ENCODE measurements at regions of chr17 and their contacts with region 1.

Region 1: GRCh38 chr17:48095611-48096010 is 5.7 kb downstream of the CBX1 start:
- DNase-seq: no peak
- ATAC-seq: no peak
- H3K4me3 Mint-ChIP-seq: no peak overlapping the region
- H3K27ac Mint-ChIP-seq: no peak overlapping the region
- H3K4me1 Mint-ChIP-seq: peaks cover 21% of the 10 kb centered on the region
- H3K27me3 Mint-ChIP-seq: no peaks in the 10 kb centered on the region
- CTCF ChIP-seq: no peak

Region 2: DNA sequence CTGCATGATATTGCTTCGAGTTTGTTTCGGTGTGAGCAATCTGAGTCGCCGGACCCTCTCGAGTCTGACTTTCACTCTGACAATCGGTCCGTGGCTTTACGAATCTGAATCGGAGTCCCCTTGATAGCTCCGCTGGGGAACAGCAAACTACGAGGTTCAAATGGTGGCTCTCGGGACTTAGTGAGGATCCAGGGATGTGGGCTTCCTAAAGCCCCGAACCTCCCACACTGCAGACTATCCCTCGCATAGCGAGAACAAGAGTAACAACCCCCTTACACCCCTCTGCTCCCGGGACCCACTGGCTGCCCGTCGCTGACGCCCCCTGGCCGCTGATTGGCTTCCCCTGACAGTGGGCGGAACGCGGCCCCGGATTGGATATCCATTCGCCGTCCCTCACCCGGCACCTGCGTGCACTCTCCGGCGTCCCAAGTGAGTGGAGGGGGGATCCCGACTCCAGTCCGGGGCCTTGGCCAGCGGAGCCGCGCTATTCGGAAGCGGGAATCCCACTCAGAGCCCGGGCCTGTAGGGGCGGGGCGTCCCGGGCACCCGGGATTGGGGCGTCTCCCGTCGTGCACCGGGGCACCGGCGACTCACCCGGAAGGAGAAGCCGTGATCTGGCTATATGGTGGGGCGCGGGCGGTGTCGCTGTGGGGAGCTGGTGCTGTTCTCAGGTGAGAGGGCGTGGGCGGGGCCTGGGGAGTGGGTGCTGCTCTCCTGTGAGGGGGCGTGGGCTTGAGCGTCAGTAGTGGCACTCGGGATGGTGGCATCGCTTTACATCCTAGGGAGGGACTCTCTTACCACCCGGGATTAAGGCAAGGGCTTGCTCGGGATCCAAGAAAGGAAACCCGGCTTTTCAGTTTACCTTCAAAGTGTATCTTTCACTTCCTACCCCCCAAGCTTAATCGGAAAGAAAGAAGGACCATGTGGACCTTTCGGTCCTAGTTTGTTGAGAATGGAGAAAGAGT is 11.8 kb after region 1 on chr17 and contains the start of gene SNX11:
- CTCF ChIA-PET with region 1: interaction called, 31 read pairs
- POLR2A ChIA-PET with region 1: interaction called, 83 read pairs
- intact Hi-C with region 1: no loop called
- DNase-seq: peak; percentile 89
- ATAC-seq: peak; percentile 71
- H3K4me3 Mint-ChIP-seq: peak within 1 kb of the TSS; percentile 99
- H3K27ac Mint-ChIP-seq: peak within 1 kb of the TSS; percentile 97
- H3K4me1 Mint-ChIP-seq: peaks cover 69% of the 10 kb centered on the region
- H3K27me3 Mint-ChIP-seq: no peaks in the 10 kb centered on the region
- CTCF ChIP-seq: no peak
- total RNA-seq, gene SNX11: 129 and 145 TPM in 2 replicates

Region 3: DNA sequence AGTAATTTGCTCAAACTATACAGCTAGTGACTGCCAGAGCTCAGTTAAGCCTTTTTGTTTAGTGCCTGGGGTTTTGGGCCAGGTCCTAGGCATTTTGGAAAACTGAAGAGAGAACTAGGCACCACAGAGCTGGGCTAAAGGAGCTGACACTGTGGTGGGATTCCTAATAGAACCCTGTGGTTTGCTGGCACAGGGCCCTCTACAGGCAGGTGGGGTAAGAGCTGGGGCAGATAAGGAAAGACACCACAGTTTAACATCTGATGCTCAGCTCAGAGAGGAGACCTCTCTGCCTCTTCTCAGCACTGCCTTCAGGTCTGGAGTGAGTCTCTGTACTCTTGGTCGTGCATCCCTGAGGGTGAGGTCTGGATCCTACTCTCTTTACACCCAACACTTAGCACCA is 133.1 kb after region 1 on chr17:
- CTCF ChIA-PET with region 1: no interaction called
- POLR2A ChIA-PET with region 1: no interaction called
- intact Hi-C with region 1: no loop called
- DNase-seq: no peak
- ATAC-seq: no peak
- H3K4me3 Mint-ChIP-seq: no peak overlapping the region
- H3K27ac Mint-ChIP-seq: no peak overlapping the region
- H3K4me1 Mint-ChIP-seq: no peaks in the 10 kb centered on the region
- H3K27me3 Mint-ChIP-seq: peaks cover 2% of the 10 kb centered on the region
- CTCF ChIP-seq: no peak